Activated CD4-positive, alpha-beta memory T cell treated with anti-CD3 and anti-CD28 coated beads for 36 hours (primary cell): ENCODE measurements at regions of chr4 and their contacts with region 1.

Region 1: DNA sequence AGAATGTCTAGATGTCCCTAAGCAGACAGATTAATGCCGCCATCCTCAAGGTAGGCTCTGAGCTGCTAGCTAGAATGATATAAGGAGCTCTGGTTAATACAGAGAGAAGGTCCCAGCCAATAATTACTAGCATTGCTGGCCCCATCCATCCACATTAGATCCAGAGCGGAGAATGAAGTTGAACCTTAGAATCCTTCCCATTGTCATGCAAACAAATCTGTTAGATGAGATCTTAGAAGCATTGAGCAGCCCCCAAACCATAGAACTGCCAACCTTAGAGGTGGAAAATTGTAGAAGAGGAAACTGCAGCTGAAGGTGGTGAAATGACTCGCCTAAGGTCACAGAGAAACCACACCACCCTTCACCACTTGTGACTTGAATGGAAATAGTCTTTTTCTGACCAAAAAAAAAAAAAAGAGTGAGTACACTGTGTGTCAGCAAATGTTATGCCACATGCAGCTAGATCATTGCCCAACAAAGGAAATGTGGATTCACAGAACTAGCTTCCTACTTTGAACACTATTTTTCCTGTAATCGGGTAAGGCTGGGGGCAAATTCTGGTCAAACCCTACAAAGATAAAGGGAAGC is 162.1 kb downstream of the SMIM20 start:
- DNase-seq: peak; percentile 81
- H3K4me3 Mint-ChIP-seq: peak overlapping the region; percentile 34
- H3K27ac Mint-ChIP-seq: peak overlapping the region; percentile 96
- H3K4me1 Mint-ChIP-seq: peaks cover 87% of the 10 kb centered on the region
- H3K27me3 Mint-ChIP-seq: no peaks in the 10 kb centered on the region

Region 2: DNA sequence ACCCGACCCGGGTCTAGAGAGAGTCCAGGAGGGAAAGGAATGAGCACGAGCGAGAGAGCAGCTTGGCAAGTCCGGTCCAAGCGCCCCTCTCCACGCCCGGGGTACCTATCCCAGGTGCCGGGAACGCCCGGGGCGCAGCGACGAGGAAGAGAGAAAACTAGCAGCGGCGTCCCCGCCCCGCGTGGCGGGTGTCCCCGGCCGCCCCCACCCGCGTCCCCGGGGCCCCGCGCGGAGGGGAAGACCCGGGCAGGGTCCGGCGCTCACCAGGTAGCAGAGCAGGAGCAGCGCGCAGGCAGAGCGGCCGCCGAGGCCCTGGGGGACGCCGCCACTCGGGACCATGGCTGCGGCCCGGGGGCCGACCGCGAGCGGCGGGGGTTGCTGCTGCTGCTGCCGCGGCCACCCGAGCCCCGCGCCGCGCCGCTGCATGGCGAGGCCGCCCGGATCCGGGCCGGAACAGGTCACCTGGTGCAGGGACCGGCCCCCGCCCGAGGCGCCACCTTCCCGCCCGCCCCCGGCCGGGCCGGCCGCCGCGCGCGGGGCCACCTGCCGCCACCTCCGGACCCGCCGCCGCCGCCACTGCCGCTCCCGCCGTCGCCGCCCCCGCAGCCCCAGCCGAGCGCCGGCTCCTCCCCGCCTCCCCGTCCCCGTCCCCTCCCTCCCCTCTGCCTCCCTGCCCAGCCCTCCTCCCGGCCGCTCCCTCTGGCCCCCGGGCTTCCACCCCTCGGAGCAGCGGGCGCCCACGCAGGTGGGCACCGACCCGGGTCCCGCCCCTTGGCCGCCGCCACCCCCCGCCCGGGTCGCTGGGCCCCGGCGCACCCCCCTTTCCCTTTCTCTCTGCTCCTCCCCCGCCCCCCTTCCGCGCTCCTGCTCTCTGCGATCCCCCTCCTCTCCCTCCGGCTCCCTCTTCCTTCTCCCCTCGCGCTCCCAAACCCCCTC is 213.4 kb before region 1 on chr4 and contains the start of gene SEL1L3:
- CTCF ChIA-PET with region 1: no interaction called
- POLR2A ChIA-PET with region 1: no interaction called
- intact Hi-C with region 1: loop called (anchors 1 kb)
- DNase-seq: peak; percentile 74
- H3K4me3 Mint-ChIP-seq: peak within 1 kb of the TSS; percentile 99
- H3K27ac Mint-ChIP-seq: peak within 1 kb of the TSS; percentile 100
- H3K4me1 Mint-ChIP-seq: peaks cover 40% of the 10 kb centered on the region
- H3K27me3 Mint-ChIP-seq: peaks cover 2% of the 10 kb centered on the region
- total RNA-seq, gene SEL1L3: 67.1 to 67.7 TPM

Region 3: GRCh38 chr4:25908491-25908901 is 167.6 kb before region 1 on chr4:
- CTCF ChIA-PET with region 1: no interaction called
- POLR2A ChIA-PET with region 1: no interaction called
- intact Hi-C with region 1: no loop called
- DNase-seq: no peak
- H3K4me3 Mint-ChIP-seq: no peak overlapping the region
- H3K27ac Mint-ChIP-seq: no peak overlapping the region
- H3K4me1 Mint-ChIP-seq: peaks cover 6% of the 10 kb centered on the region
- H3K27me3 Mint-ChIP-seq: no peaks in the 10 kb centered on the region

Region 4: GRCh38 chr4:25938787-25939186 is 137.3 kb before region 1 on chr4:
- CTCF ChIA-PET with region 1: no interaction called
- POLR2A ChIA-PET with region 1: no interaction called
- intact Hi-C with region 1: loop called (anchors 1 kb)
- DNase-seq: peak; percentile 77
- H3K4me3 Mint-ChIP-seq: no peak overlapping the region
- H3K27ac Mint-ChIP-seq: peak overlapping the region; percentile 82
- H3K4me1 Mint-ChIP-seq: peaks cover 24% of the 10 kb centered on the region
- H3K27me3 Mint-ChIP-seq: peaks cover 20% of the 10 kb centered on the region

Region 5: GRCh38 chr4:26000274-26000950 is 75.7 kb before region 1 on chr4:
- CTCF ChIA-PET with region 1: no interaction called
- POLR2A ChIA-PET with region 1: no interaction called
- intact Hi-C with region 1: no loop called
- DNase-seq: no peak
- H3K4me3 Mint-ChIP-seq: no peak overlapping the region
- H3K27ac Mint-ChIP-seq: no peak overlapping the region
- H3K4me1 Mint-ChIP-seq: no peaks in the 10 kb centered on the region
- H3K27me3 Mint-ChIP-seq: peaks cover 4% of the 10 kb centered on the region

Region 6: DNA sequence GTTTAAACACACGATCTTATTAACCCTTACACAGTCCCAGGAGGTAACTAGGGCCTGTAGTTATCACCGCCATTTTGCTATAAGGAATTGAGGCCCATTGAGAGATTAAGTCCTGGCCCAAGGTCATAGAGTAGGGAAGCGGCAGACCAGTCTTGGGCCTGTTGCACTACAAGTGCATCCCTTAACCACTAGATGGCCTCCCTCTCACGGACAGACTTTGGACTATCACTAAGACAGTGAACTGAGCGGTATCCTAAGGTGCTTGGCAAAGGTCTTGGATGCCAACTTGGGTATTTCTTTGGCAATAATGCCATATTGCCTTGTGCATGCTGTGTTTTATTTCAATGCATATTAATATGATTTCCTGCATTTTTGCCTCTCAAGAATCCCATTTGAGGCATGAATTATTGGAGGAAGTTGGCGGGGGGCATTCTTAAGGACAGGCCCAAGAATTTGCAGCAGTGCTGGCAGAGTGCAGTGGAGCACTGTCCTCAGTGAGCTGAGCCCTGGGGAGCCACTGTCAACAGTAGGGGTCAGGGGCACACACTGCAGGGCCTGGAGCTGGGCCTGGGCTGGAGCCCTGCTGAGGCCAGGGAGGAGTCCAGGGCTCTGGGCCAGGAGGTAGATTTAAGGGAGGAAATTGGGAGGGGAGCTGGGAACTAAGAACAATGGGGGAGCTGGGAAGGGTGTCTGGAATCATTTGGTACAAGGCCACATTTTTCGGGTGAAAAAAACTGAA is 14.7 kb before region 1 on chr4:
- CTCF ChIA-PET with region 1: interaction called, 8 read pairs
- POLR2A ChIA-PET with region 1: interaction called, 8 read pairs
- intact Hi-C with region 1: loop called (anchors 1 kb)
- DNase-seq: peak; percentile 43
- H3K4me3 Mint-ChIP-seq: no peak overlapping the region
- H3K27ac Mint-ChIP-seq: no peak overlapping the region
- H3K4me1 Mint-ChIP-seq: peaks cover 26% of the 10 kb centered on the region
- H3K27me3 Mint-ChIP-seq: no peaks in the 10 kb centered on the region

Region 7: DNA sequence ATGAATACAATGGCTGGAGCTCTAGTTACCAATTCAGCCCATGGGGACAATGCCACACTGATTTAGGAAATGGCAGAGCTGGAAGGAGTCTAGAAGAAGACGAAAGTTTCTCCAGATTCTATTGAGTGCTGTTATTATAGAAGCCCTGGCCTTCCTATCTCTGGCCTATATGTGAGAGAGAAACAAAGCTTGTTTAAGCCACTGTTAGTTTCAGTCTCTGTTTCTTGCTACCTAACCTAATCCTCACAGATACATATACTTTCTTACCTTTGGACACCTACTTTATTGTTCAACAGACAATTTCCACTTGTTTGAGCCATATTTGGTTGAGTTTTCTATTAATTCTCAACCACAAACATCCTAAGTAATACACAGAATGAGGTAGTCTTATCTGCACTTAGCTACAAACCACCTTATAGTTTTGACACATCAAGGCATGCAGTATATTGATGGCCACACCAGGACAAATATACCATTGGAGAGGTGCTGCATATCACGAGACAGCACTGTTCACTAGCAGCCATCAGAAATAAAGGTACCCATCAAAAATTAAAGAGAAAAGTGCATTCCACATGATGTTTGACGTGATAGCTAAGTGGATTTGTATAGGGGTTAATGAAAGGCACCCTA is 28.1 kb after region 1 on chr4:
- CTCF ChIA-PET with region 1: no interaction called
- POLR2A ChIA-PET with region 1: no interaction called
- intact Hi-C with region 1: no loop called
- DNase-seq: no peak
- H3K4me3 Mint-ChIP-seq: no peak overlapping the region
- H3K27ac Mint-ChIP-seq: no peak overlapping the region
- H3K4me1 Mint-ChIP-seq: peaks cover 7% of the 10 kb centered on the region
- H3K27me3 Mint-ChIP-seq: no peaks in the 10 kb centered on the region

Region 8: GRCh38 chr4:26130173-26130572 is 54.1 kb after region 1 on chr4:
- CTCF ChIA-PET with region 1: interaction called, 4 read pairs
- POLR2A ChIA-PET with region 1: interaction called, 16 read pairs
- intact Hi-C with region 1: loop called (anchors 1 kb)
- DNase-seq: peak; percentile 59
- H3K4me3 Mint-ChIP-seq: no peak overlapping the region
- H3K27ac Mint-ChIP-seq: peak overlapping the region; percentile 67
- H3K4me1 Mint-ChIP-seq: peaks cover 62% of the 10 kb centered on the region
- H3K27me3 Mint-ChIP-seq: no peaks in the 10 kb centered on the region

Region 9: GRCh38 chr4:26179316-26179760 is 103.2 kb after region 1 on chr4:
- CTCF ChIA-PET with region 1: interaction called, 7 read pairs
- POLR2A ChIA-PET with region 1: interaction called, 7 read pairs
- intact Hi-C with region 1: loop called (anchors 1 kb)
- DNase-seq: peak; percentile 72
- H3K4me3 Mint-ChIP-seq: no peak overlapping the region
- H3K27ac Mint-ChIP-seq: peak overlapping the region; percentile 82
- H3K4me1 Mint-ChIP-seq: peaks cover 29% of the 10 kb centered on the region
- H3K27me3 Mint-ChIP-seq: no peaks in the 10 kb centered on the region

Region 10: DNA sequence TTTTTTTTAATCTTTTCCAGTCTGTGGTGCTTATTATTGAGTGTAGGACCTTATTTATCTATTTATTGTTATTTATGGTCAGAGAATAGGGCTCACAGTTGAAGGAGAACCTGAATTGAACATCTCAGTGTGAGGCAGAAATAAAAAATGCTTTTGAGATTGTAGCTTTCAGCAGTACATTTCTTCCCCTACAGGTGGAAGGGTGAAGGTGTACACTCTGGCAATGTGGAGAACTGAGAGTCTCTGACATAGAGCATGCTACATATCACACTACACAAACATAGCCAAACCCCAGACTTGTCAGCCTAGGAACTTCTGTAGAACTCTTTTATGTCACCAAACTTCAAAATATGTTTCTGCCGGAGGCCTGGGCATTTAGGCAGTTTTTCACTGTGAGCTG is 924.7 kb after region 1 on chr4:
- CTCF ChIA-PET with region 1: no interaction called
- POLR2A ChIA-PET with region 1: no interaction called
- intact Hi-C with region 1: loop called (anchors 2 kb)
- DNase-seq: no peak
- H3K4me3 Mint-ChIP-seq: no peak overlapping the region
- H3K27ac Mint-ChIP-seq: peak overlapping the region; percentile 51
- H3K4me1 Mint-ChIP-seq: peaks cover 52% of the 10 kb centered on the region
- H3K27me3 Mint-ChIP-seq: no peaks in the 10 kb centered on the region